H1 (cell line): ENCODE measurements at regions of chr1 and their contacts with region 1.

Region 1: DNA sequence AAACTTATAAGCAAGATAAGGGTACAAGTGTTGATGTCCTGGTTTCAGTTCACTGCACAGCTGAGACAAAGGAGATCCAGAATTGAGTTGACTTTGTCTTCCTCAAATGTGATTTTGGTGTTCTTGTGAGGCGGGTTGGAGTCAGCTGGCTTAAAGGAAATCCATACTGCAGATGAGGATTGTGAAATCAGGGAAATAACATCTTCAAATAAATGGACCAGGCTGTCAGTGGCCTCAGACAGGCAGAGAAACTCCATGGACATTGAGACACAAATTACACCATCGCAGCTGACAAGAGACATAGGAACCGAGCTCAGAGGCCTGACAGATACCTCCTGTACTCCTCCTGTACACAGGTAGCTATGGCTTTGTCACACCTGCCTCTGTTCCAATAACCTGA is 27.0 kb upstream of the REG4 start:
- DNase-seq: no peak
- H3K4me3 ChIP-seq: no peak overlapping the region
- H3K27ac ChIP-seq: no peak overlapping the region
- H3K4me1 ChIP-seq: no peaks in the 10 kb centered on the region
- H3K27me3 ChIP-seq: no peaks in the 10 kb centered on the region; a peak in 1 of 7 replicates
- CTCF ChIP-seq: no peak
- EP300 ChIP-seq: no peak
- POLR2A ChIP-seq: no peak
- RAD21 ChIP-seq: no peak

Region 2: GRCh38 chr1:119827010-119827409 is 11.2 kb before region 1 on chr1:
- CTCF ChIA-PET with region 1: interaction called, 14 read pairs
- POLR2A ChIA-PET with region 1: no interaction called
- DNase-seq: peak in 1 of 2 experiments; percentile 41
- H3K4me3 ChIP-seq: no peak overlapping the region
- H3K27ac ChIP-seq: no peak overlapping the region
- H3K4me1 ChIP-seq: no peaks in the 10 kb centered on the region
- H3K27me3 ChIP-seq: no peaks in the 10 kb centered on the region
- CTCF ChIP-seq: peak in 2 of 3 experiments; percentile 49 to 59; a peak in 3 of 4 replicates
- EP300 ChIP-seq: no peak
- POLR2A ChIP-seq: no peak
- RAD21 ChIP-seq: no peak; a peak in 1 of 4 replicates